Endothelial cell of umbilical vein (primary cell): ENCODE measurements at regions of chr6 and their contacts with region 1.

Region 1: DNA sequence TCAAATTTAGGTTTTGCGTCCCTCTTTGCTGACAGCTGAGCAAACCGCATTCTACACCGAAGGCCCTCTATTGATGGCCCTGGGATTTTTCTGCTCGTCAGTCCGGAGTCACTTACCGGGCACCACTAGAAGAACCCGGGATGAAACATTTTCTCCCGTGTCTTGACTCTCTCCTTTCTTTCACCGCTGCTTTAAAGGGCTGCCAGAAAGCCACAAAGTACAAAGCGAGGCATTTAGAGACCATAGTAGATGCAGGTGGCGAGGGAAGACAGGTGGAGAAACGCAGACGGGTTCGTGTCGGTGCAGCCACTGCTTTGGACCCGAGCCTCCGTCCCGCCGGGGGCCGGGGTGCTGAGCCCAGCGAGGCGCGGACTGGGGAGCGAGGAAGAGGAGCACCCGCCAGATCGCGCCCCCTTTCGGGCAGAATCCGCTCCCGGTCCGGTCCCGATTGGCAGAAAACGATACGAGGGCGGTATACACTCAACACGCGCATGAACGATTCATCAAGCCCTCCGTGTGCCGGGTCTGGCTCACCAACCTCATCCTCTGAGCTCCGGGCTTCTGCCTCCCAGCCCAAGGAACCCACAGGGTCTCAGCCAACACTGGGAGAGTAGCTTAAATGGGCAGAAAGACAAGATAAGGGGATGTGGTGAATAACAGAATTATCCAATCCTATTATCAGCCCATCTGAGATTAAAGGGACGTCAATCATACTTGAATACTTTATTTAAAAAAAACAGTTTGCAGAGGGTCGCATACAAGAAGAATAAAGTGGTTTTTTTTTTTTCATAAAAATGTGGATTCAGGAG is 84.9 kb downstream of the TRIM27 start:
- DNase-seq: peak; percentile 88
- H3K4me3 ChIP-seq: peak overlapping the region; percentile 88 to 97 (median 95)
- H3K27ac ChIP-seq: peak overlapping the region; percentile 21
- H3K4me1 ChIP-seq: peaks cover 6% of the 10 kb centered on the region
- H3K27me3 ChIP-seq: peaks cover 1 to 13% of the 10 kb centered on the region in 2 experiments
- CTCF ChIP-seq: peak; percentile 77 to 87
- POLR2A ChIP-seq: no peak

Region 2: GRCh38 chr6:28789553-28790083 is 49.2 kb before region 1 on chr6:
- CTCF ChIA-PET with region 1: interaction called, 15 read pairs
- POLR2A ChIA-PET with region 1: no interaction called
- dilution Hi-C with region 1: no loop called
- intact Hi-C with region 1: loop called (anchors 2 kb)
- DNase-seq: peak; percentile 49
- H3K4me3 ChIP-seq: peak overlapping the region; percentile 5 to 65 (median 57)
- H3K27ac ChIP-seq: no peak overlapping the region
- H3K4me1 ChIP-seq: peaks cover under 1% of the 10 kb centered on the region
- H3K27me3 ChIP-seq: peaks cover 37 to 56% of the 10 kb centered on the region in 2 experiments
- CTCF ChIP-seq: no peak
- POLR2A ChIP-seq: no peak

Region 3: DNA sequence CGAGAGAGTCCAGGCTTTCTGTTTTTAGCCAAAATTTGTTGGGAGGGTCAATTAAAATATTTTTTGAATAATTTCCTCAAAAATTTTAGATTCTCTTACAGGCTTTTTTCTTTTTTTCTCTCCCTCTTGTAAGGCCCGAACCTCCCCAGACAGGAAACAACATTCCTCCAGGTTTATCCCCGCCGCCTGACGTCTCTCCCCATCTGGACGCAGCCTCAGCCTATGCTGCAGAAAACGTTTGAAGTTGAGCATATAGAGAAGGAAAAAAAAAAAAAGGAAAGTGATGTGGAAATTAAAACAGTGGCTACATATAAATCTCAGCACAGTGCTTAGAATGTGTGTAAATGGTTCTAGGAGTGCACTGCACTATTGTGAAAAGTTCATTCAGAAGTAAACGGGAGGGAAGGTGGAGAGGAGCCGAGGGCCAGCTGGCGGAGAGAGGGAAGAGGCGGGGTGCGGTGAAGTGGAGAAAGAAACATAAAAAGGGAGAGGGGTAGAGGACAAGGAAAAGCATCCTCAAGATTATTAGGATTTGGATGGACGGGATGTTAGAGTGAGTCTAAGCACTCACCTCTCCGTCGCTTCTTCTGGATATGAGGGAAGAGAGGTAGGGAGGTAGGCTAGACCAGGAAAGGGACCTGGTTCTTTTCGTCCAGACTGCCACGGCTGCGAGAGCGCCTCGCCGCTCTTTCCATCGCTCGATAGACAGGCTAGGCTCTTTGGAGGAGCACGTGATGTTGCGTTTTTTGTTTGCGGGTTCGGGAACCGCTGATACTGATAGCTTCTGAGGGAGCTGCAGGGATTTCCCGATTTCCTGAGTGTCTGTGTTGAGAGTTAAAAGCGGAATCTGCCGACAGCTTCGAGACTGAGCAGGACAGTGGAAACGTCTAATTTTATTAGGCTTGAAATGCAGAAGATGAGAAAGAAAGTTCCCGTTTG is 13.8 kb before region 1 on chr6:
- CTCF ChIA-PET with region 1: interaction called, 10 read pairs
- POLR2A ChIA-PET with region 1: no interaction called
- dilution Hi-C with region 1: no loop called
- intact Hi-C with region 1: no loop called
- DNase-seq: no peak
- H3K4me3 ChIP-seq: no peak overlapping the region
- H3K27ac ChIP-seq: no peak overlapping the region
- H3K4me1 ChIP-seq: no peaks in the 10 kb centered on the region
- H3K27me3 ChIP-seq: peaks cover 29 to 44% of the 10 kb centered on the region in 2 experiments
- CTCF ChIP-seq: no peak
- POLR2A ChIP-seq: no peak

Region 4: GRCh38 chr6:28895134-28895812 is 56.4 kb after region 1 on chr6:
- CTCF ChIA-PET with region 1: interaction called, 15 read pairs
- POLR2A ChIA-PET with region 1: interaction called, 11 read pairs
- dilution Hi-C with region 1: no loop called
- intact Hi-C with region 1: loop called (anchors 1 kb)
- DNase-seq: peak; percentile 98
- H3K4me3 ChIP-seq: peak overlapping the region; percentile 22 to 82 (median 68)
- H3K27ac ChIP-seq: peak overlapping the region; percentile 88
- H3K4me1 ChIP-seq: peaks cover 6% of the 10 kb centered on the region
- H3K27me3 ChIP-seq: no peaks in the 10 kb centered on the region
- CTCF ChIP-seq: no peak
- POLR2A ChIP-seq: peak; percentile 92

Region 5: DNA sequence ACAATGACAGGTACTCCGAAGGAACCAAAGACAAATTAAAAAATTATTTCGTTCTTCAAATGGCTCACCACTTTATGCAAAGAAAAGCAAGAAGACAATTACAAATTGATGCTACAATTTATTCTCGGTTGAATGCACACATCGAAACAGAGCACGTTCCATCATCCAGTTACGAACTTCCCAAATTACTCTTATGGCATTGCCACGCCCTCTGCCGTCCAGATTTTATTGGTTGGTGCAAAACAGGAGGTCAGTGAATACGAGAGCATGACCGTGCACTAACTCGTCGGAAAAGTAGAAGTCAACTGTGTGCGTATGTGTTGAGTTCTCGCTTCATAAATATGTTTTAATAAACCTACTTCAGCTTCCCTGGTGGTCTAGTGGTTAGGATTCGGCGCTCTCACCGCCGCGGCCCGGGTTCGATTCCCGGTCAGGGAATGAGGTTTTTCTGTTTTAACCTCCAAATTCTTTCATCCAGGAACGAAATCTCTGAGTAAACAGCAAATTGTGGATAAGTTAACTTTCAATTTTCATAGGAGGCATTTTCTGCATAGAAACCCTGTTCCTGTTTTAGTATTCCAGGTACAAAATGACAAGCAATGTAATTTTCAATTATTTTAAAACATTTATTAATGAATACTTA is 143.1 kb after region 1 on chr6:
- CTCF ChIA-PET with region 1: interaction called, 56 read pairs
- POLR2A ChIA-PET with region 1: no interaction called
- dilution Hi-C with region 1: no loop called
- intact Hi-C with region 1: loop called (anchors 1 kb)
- DNase-seq: peak; percentile 94
- H3K4me3 ChIP-seq: peak overlapping the region; percentile 44 to 82 (median 60)
- H3K27ac ChIP-seq: peak overlapping the region; percentile 42
- H3K4me1 ChIP-seq: peaks cover 25% of the 10 kb centered on the region
- H3K27me3 ChIP-seq: no peaks in the 10 kb centered on the region
- CTCF ChIP-seq: no peak
- POLR2A ChIP-seq: no peak

Region 6: DNA sequence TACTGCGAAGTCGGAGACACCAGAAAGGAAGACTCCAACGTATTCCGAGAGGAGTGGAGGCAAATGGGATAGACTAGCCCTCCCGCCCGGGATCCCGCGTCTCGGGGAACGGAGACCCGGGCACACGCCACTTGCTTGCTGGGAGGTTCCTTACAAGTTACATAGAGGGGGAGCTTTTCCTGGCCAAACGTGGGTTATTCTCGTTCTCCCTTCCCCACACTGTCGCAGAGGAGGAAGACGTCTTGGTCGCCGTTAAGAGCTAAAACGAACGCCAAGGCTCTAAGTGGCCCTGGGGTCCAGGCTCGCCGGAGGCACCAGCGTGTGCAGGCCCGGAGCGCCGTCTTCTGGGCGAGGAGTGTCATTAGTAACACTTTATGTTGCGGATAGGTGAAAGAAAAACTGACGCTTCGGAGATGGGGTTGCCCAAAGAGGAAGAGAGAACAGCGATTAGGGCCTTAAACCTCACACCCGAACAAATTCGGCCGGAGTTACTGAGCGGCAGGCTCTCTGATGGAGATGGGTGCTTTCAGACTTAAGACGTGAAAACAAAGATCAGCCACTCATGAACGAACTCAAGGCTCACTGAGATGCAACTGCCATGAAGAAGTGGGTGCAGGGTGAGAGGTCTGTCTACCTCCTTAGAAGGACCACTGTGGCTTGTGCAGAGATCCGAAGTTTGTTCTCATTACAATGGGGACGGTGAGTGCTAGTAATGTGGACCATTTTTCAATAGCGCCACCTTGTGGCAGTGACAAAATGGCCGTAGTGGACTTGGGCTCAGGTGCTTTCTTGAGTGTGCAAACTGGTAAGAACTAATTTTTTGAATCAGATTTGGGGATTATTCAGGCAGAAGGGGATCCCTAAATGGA is 178.0 kb after region 1 on chr6:
- CTCF ChIA-PET with region 1: interaction called, 100 read pairs
- POLR2A ChIA-PET with region 1: no interaction called
- dilution Hi-C with region 1: no loop called
- intact Hi-C with region 1: loop called (anchors 1 kb)
- DNase-seq: peak; percentile 86
- H3K4me3 ChIP-seq: peak overlapping the region; percentile 44 to 90 (median 80)
- H3K27ac ChIP-seq: no peak overlapping the region
- H3K4me1 ChIP-seq: peaks cover 9% of the 10 kb centered on the region
- H3K27me3 ChIP-seq: peaks cover 2 to 3% of the 10 kb centered on the region in 2 experiments
- CTCF ChIP-seq: peak; percentile 72 to 78
- POLR2A ChIP-seq: no peak

Region 7: DNA sequence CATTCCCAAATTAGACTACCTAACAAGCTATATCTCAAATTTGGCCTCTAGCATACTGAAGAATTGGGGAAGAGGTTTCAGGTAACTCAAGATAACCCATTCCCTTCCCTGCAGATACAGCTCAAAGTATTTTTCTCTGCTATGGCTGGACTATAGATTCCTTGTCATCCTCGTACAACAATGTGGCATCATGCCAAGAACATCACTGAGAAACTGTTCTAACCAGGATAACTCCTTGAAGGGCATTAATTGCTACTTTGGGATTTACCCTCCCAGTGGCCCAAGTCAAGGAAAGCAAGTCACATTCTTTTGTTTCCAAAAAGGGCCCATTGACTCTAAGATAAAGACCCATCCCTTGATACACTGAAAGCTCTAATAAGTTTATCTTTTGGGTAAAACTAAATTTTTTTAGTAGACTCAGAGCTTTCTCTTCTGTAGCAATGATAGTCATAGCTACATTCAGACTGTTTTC is 268.8 kb after region 1 on chr6 and contains the start of gene OR2J3:
- CTCF ChIA-PET with region 1: no interaction called
- POLR2A ChIA-PET with region 1: no interaction called
- dilution Hi-C with region 1: no loop called
- intact Hi-C with region 1: no loop called
- DNase-seq: no peak
- H3K4me3 ChIP-seq: no peak within 1 kb of the TSS
- H3K27ac ChIP-seq: no peak within 1 kb of the TSS
- H3K4me1 ChIP-seq: no peaks in the 10 kb centered on the region
- H3K27me3 ChIP-seq: no peaks in the 10 kb centered on the region
- CTCF ChIP-seq: no peak
- POLR2A ChIP-seq: no peak
- total RNA-seq, gene OR2J3: not detected in 2 replicates